B cell (primary cell): ENCODE measurements at regions of chr2 and their contacts with region 1.

Region 1: GRCh38 chr2:104976603-104977120 is 61.2 kb upstream of the MRPS9 start:
- DNase-seq: peak; percentile 89
- ATAC-seq: peak; percentile 97
- H3K4me3 ChIP-seq: peak overlapping the region; percentile 5 to 55 (median 47)
- H3K4me3 Mint-ChIP-seq: peak overlapping the region; percentile 90
- H3K27ac ChIP-seq: peak overlapping the region; percentile 20 to 46
- H3K27ac Mint-ChIP-seq: peak overlapping the region; percentile 94
- H3K4me1 ChIP-seq: peaks cover 28 to 33% of the 10 kb centered on the region in 2 donors
- H3K4me1 Mint-ChIP-seq: peaks cover 38% of the 10 kb centered on the region
- H3K27me3 ChIP-seq: no peaks in the 10 kb centered on the region
- H3K27me3 Mint-ChIP-seq: no peaks in the 10 kb centered on the region
- CTCF ChIP-seq: peak; percentile 79

Region 2: DNA sequence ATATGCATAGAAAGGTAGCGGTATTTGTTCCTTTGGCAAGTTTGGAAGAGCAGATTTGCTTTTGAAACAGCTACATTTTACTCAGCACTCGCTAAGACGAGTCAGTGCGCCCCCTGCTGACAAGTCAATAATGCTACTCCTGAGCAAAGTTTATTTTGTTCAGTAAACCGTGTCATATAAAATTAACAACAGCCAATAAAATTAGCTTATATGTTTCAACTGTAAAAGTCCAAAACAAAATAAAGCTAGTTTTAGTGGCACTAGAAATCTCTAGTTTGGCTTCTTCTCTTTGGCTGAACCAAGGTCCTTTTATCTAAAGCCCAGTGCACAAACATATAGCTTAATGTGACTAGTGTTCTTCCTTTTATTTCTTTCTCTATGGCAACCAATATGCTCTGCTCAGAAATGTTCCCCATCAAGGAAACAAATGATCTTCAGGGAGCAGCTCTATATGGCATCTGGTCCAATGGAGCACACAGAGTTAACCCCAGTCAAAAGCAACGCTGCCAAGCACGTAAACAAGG is 127.0 kb before region 1 on chr2:
- CTCF ChIA-PET with region 1: interaction called, 4 read pairs
- POLR2A ChIA-PET with region 1: no interaction called
- intact Hi-C with region 1: loop called (anchors 5 kb)
- DNase-seq: peak; percentile 62
- ATAC-seq: no peak
- H3K4me3 ChIP-seq: no peak overlapping the region
- H3K4me3 Mint-ChIP-seq: no peak overlapping the region
- H3K27ac ChIP-seq: no peak overlapping the region
- H3K27ac Mint-ChIP-seq: no peak overlapping the region
- H3K4me1 ChIP-seq: peaks cover 39 to 59% of the 10 kb centered on the region in 2 donors
- H3K4me1 Mint-ChIP-seq: peaks cover 38% of the 10 kb centered on the region
- H3K27me3 ChIP-seq: peaks cover 0 to 94% (median 84%) of the 10 kb centered on the region in 4 experiments
- H3K27me3 Mint-ChIP-seq: peaks cover 87% of the 10 kb centered on the region
- CTCF ChIP-seq: peak; percentile 82

Region 3: GRCh38 chr2:104923665-104924064 is 53.0 kb before region 1 on chr2:
- CTCF ChIA-PET with region 1: interaction called, 7 read pairs
- POLR2A ChIA-PET with region 1: no interaction called
- intact Hi-C with region 1: loop called (anchors 5 kb)
- DNase-seq: no peak
- ATAC-seq: no peak
- H3K4me3 ChIP-seq: no peak overlapping the region
- H3K4me3 Mint-ChIP-seq: no peak overlapping the region
- H3K27ac ChIP-seq: no peak overlapping the region
- H3K27ac Mint-ChIP-seq: no peak overlapping the region
- H3K4me1 ChIP-seq: no peaks in the 10 kb centered on the region
- H3K4me1 Mint-ChIP-seq: peaks cover 7% of the 10 kb centered on the region
- H3K27me3 ChIP-seq: no peaks in the 10 kb centered on the region
- H3K27me3 Mint-ChIP-seq: no peaks in the 10 kb centered on the region
- CTCF ChIP-seq: no peak

Region 4: GRCh38 chr2:105037572-105038382 is 61.1 kb after region 1 on chr2 and contains the start of gene MRPS9:
- CTCF ChIA-PET with region 1: interaction called, 11 read pairs
- POLR2A ChIA-PET with region 1: interaction called, 8 read pairs
- intact Hi-C with region 1: loop called (anchors 1 kb)
- DNase-seq: peak; percentile 98
- ATAC-seq: peak; percentile 99
- H3K4me3 ChIP-seq: peak within 1 kb of the TSS; percentile 76 to 96 (median 84)
- H3K4me3 Mint-ChIP-seq: peak within 1 kb of the TSS; percentile 100
- H3K27ac ChIP-seq: peak within 1 kb of the TSS; percentile 65 to 80
- H3K27ac Mint-ChIP-seq: peak within 1 kb of the TSS; percentile 99
- H3K4me1 ChIP-seq: peaks cover 12 to 16% of the 10 kb centered on the region in 2 donors
- H3K4me1 Mint-ChIP-seq: peaks cover 35% of the 10 kb centered on the region
- H3K27me3 ChIP-seq: no peaks in the 10 kb centered on the region
- H3K27me3 Mint-ChIP-seq: no peaks in the 10 kb centered on the region
- CTCF ChIP-seq: no peak
- total RNA-seq, gene MRPS9: 18.3 and 19.8 TPM in 2 replicates

Region 5: GRCh38 chr2:105062158-105062557 is 85.5 kb after region 1 on chr2:
- CTCF ChIA-PET with region 1: no interaction called
- POLR2A ChIA-PET with region 1: no interaction called
- intact Hi-C with region 1: no loop called
- DNase-seq: no peak
- ATAC-seq: no peak
- H3K4me3 ChIP-seq: no peak overlapping the region
- H3K4me3 Mint-ChIP-seq: no peak overlapping the region
- H3K27ac ChIP-seq: no peak overlapping the region
- H3K27ac Mint-ChIP-seq: no peak overlapping the region
- H3K4me1 ChIP-seq: no peaks in the 10 kb centered on the region
- H3K4me1 Mint-ChIP-seq: peaks cover 5% of the 10 kb centered on the region
- H3K27me3 ChIP-seq: no peaks in the 10 kb centered on the region
- H3K27me3 Mint-ChIP-seq: no peaks in the 10 kb centered on the region
- CTCF ChIP-seq: no peak

Region 6: DNA sequence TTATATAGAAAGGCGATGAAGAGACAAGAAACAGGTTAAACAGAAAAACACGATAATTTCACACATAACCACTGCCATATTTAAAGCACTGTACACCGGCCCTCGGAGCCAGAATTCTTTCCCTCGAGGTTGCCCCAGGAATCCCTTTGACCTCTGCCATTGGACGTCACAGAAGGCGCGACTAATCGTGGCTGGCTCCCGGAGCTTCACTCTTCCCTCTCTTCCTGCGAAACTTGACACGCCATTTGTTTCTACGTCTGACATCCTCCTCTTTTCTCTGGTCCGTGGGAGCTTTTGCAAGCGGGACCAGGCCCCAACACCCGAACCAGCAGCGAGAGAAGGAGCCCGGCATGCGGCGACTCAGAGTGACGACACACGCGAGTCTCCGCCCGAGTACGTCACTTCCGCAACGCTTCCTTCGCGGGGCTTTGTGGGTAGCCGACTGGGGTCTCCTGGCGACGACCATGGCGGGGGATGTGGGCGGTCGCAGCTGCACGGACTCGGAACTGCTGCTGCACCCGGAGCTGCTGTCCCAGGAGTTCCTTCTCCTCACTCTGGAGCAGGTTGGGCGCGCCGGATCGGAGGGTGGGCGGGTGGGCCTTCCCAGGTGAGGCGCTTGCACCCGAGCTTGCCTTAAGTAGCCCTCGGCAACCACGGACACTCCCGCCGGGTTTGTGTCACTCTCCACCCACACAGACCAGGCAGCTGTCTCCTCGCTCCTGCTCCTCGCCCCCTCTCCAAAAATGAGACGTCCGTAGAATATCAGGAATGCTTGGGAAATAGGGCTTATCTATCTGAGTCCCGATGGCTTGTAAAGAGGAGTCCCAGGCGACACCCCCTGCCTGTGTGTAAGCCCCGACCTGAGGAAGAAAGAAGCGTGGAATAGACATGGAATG is 360.7 kb after region 1 on chr2 and contains the start of gene C2orf49:
- CTCF ChIA-PET with region 1: no interaction called
- POLR2A ChIA-PET with region 1: no interaction called
- intact Hi-C with region 1: loop called (anchors 2 kb)
- DNase-seq: peak; percentile 95
- ATAC-seq: peak; percentile 93
- H3K4me3 ChIP-seq: peak within 1 kb of the TSS; percentile 84 to 95 (median 86)
- H3K4me3 Mint-ChIP-seq: peak within 1 kb of the TSS; percentile 100
- H3K27ac ChIP-seq: peak within 1 kb of the TSS; percentile 92 to 98
- H3K27ac Mint-ChIP-seq: peak within 1 kb of the TSS; percentile 99
- H3K4me1 ChIP-seq: peaks cover 17 to 21% of the 10 kb centered on the region in 2 donors
- H3K4me1 Mint-ChIP-seq: peaks cover 27% of the 10 kb centered on the region
- H3K27me3 ChIP-seq: no peaks in the 10 kb centered on the region
- H3K27me3 Mint-ChIP-seq: no peaks in the 10 kb centered on the region
- CTCF ChIP-seq: no peak
- total RNA-seq, gene C2orf49: 29.3 and 32.1 TPM in 2 replicates

Region 7: GRCh38 chr2:105812180-105813044 is 835.8 kb after region 1 on chr2:
- CTCF ChIA-PET with region 1: no interaction called
- POLR2A ChIA-PET with region 1: no interaction called
- intact Hi-C with region 1: no loop called
- DNase-seq: no peak
- ATAC-seq: no peak
- H3K4me3 ChIP-seq: no peak overlapping the region
- H3K4me3 Mint-ChIP-seq: no peak overlapping the region
- H3K27ac ChIP-seq: peak overlapping the region in 1 of 2 donors; percentile 43
- H3K27ac Mint-ChIP-seq: peak overlapping the region; percentile 59
- H3K4me1 ChIP-seq: peaks cover 33 to 52% of the 10 kb centered on the region in 2 donors
- H3K4me1 Mint-ChIP-seq: peaks cover 70% of the 10 kb centered on the region
- H3K27me3 ChIP-seq: no peaks in the 10 kb centered on the region
- H3K27me3 Mint-ChIP-seq: no peaks in the 10 kb centered on the region
- CTCF ChIP-seq: no peak